Sigmoid colon (tissue), 7 donors: ENCODE measurements at regions of chr4 and their contacts with region 1.

Region 1: GRCh38 chr4:53816561-53816960 is 225.3 kb upstream of the LNX1 start:
- DNase-seq: no peak
- H3K4me3 ChIP-seq: no peak overlapping the region
- H3K27ac ChIP-seq: no peak overlapping the region
- H3K4me1 ChIP-seq: peaks cover 3 to 37% (median 29%) of the 10 kb centered on the region in 4 donors
- H3K27me3 ChIP-seq: no peaks in the 10 kb centered on the region
- CTCF ChIP-seq: no peak
- EP300 ChIP-seq: no peak
- POLR2A ChIP-seq: no peak

Region 2: GRCh38 chr4:54197926-54198325 is 381.4 kb after region 1 on chr4:
- intact Hi-C with region 1: loop called (anchors 5 kb)
- DNase-seq: no peak
- H3K4me3 ChIP-seq: peak overlapping the region in 1 of 4 donors; percentile 2
- H3K27ac ChIP-seq: peak overlapping the region in 3 of 4 donors; percentile 25 to 78 (median 74)
- H3K4me1 ChIP-seq: peaks cover 0 to 22% (median 20%) of the 10 kb centered on the region in 4 donors
- H3K27me3 ChIP-seq: no peaks in the 10 kb centered on the region
- CTCF ChIP-seq: no peak
- EP300 ChIP-seq: no peak
- POLR2A ChIP-seq: no peak